Dorsolateral prefrontal cortex (tissue), 120 donors: ENCODE measurements at regions of chr6 and their contacts with region 1.

Region 1: GRCh38 chr6:160766989-160767660 is 65.1 kb downstream of the PLG start:
- DNase-seq: peak; percentile 36 to 85 (median 70)
- H3K4me3 ChIP-seq: peak overlapping the region; percentile 37 to 75 (median 63)
- H3K27ac ChIP-seq: peak overlapping the region in 15 of 59 donors; percentile 14 to 68 (median 46)
- H3K27me3 ChIP-seq: no peaks in the 10 kb centered on the region
- CTCF ChIP-seq: peak; percentile 46 to 87 (median 77)

Region 2: GRCh38 chr6:160520043-160520904 is 246.9 kb before region 1 on chr6:
- intact Hi-C with region 1: loop called in 1 of 2 experiments (anchors 1 kb)
- DNase-seq: peak; percentile 70 to 89 (median 80)
- H3K4me3 ChIP-seq: peak overlapping the region; percentile 55 to 86 (median 76)
- H3K27ac ChIP-seq: peak overlapping the region in 58 of 59 donors; percentile 44 to 94 (median 82)
- H3K27me3 ChIP-seq: no peaks in the 10 kb centered on the region
- CTCF ChIP-seq: peak in 46 of 56 donors; percentile 2 to 97 (median 52)

Region 3: GRCh38 chr6:160733050-160733646 is 34.0 kb before region 1 on chr6:
- intact Hi-C with region 1: loop called in 1 of 2 experiments (anchors 5 kb)
- DNase-seq: peak in 7 of 10 donors; percentile 11 to 58 (median 44)
- H3K4me3 ChIP-seq: no peak overlapping the region
- H3K27ac ChIP-seq: no peak overlapping the region
- H3K27me3 ChIP-seq: peaks cover 0 to 18% (median 0%) of the 10 kb centered on the region in 45 donors
- CTCF ChIP-seq: peak; percentile 40 to 80 (median 69)